CD8-positive, alpha-beta T cell (primary cell): ENCODE measurements at regions of chr13 and their contacts with region 1.

Region 1: DNA sequence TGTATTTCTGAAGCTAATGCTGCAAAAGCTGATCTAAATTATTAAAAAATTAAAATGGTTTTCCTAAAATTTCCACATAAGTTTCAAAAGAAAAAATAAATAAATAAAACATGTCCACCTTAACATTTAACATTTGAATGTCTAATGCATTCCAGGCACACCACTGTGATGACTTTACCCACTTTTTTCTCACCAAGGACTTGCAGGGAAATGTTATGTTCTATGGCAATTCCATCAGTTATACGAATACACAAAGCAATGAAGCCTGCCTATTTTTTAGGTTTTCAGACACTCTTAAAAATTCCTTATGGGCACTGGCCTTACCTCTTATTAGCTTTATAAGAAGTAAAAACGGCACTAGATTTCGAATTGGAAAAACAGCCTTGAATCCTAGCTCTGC is 10.2 kb downstream of the TSC22D1 start:
- DNase-seq: no peak
- ATAC-seq: no peak
- H3K4me3 ChIP-seq: no peak overlapping the region
- H3K4me3 Mint-ChIP-seq: no peak overlapping the region
- H3K27ac ChIP-seq: no peak overlapping the region
- H3K27ac Mint-ChIP-seq: no peak overlapping the region
- H3K4me1 ChIP-seq: peaks cover 3% of the 10 kb centered on the region
- H3K4me1 Mint-ChIP-seq: peaks cover 55% of the 10 kb centered on the region
- H3K27me3 ChIP-seq: no peaks in the 10 kb centered on the region
- H3K27me3 Mint-ChIP-seq: no peaks in the 10 kb centered on the region
- CTCF ChIP-seq: no peak

Region 2: DNA sequence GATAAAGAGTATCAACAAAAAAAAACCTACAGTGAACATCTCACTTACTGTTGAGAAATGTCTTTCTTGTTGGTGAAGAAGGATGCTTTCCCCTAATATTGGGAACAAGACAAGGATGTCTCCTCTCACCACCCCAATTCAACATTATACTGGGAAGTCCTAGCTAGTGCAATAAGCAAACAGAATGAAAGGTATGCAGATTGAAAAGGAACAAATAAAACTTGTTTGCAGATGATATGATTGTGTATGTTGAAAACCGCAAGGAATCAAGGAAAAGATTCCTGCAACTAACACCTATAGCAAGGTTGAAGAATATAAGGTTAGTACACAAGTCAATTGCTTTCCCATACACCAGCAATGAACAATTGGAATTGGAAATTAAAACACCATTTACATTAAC is 36.5 kb before region 1 on chr13:
- CTCF ChIA-PET with region 1: no interaction called
- POLR2A ChIA-PET with region 1: no interaction called
- intact Hi-C with region 1: loop called in 1 of 2 experiments (anchors 5 kb)
- DNase-seq: no peak
- ATAC-seq: no peak
- H3K4me3 ChIP-seq: no peak overlapping the region
- H3K4me3 Mint-ChIP-seq: no peak overlapping the region
- H3K27ac ChIP-seq: no peak overlapping the region
- H3K27ac Mint-ChIP-seq: no peak overlapping the region
- H3K4me1 ChIP-seq: no peaks in the 10 kb centered on the region
- H3K4me1 Mint-ChIP-seq: no peaks in the 10 kb centered on the region
- H3K27me3 ChIP-seq: no peaks in the 10 kb centered on the region
- H3K27me3 Mint-ChIP-seq: no peaks in the 10 kb centered on the region
- CTCF ChIP-seq: no peak